Right ventricle myocardium inferior (tissue), 1 donor: ENCODE measurements at regions of chr6 and their contacts with region 1.

Region 1: GRCh38 chr6:167683028-167683862 is 143.5 kb upstream of the AFDN start:
- DNase-seq: no peak
- ATAC-seq: peak; percentile 85

Region 2: DNA sequence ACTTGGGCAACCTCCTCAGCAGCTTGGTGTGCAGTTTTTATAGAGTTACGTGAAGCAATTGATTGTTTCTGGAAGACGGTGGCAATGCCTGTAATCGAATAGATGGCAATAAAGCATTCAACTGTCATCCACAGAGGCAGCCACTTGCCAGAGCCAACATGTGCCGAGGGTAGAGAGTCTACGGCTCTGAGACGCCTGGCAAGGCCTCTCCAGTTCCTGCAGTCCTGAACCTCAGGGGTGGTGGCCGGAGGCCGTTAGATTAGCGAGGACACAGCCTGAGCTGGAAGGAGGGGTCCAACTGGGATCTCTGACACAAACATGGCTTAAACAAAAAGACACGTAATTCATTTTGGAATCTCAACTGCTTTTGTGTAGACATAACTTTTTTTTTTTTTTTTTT is 359.1 kb before region 1 on chr6:
- intact Hi-C with region 1: no loop called
- DNase-seq: no peak
- ATAC-seq: no peak

Region 3: GRCh38 chr6:167420858-167421766 is 262.1 kb before region 1 on chr6:
- intact Hi-C with region 1: no loop called
- DNase-seq: no peak
- ATAC-seq: no peak

Region 4: GRCh38 chr6:167750956-167751386 is 67.7 kb after region 1 on chr6:
- intact Hi-C with region 1: loop called (anchors 5 kb)
- DNase-seq: no peak
- ATAC-seq: peak; percentile 91

Region 5: GRCh38 chr6:167796192-167796996 is 113.1 kb after region 1 on chr6:
- intact Hi-C with region 1: no loop called
- DNase-seq: no peak
- ATAC-seq: peak; percentile 90